ENCODE measurements at regions of chr14 and their contacts with region 1.

Region 1: DNA sequence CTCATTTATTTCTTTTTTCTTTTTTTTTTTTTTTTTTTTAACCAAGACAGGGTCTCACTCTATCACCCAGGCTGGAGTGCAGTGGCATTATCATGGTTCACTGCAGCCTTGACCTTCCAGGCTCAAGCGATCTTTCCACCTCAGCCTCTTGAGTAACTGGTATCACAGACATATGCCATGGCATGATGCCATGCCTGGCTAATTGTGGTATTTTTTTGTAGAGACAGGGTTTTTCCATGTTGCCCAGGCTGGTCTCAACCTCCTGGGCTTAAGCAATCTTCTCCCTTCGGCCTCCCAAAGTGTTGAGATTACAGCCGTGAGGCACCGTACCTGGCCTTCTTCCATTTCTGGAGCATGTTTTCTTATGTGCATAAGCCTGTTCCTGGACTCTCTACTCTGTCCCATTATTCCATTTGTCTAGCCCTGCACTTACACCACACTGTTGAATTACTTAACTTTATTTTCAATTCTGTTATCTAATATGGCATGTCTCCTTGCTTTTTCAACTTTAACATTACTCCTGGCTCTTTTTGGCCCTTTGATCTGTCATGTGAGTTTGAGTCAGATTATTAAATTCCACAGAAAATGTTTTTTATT is 47.9 kb upstream of the PTGDR start:
- DNase-seq: no peak
- H3K4me3 ChIP-seq: no peak overlapping the region
- H3K27ac ChIP-seq: no peak overlapping the region
- H3K4me1 ChIP-seq: peaks cover 0 to 9% (median 0%) of the 10 kb centered on the region in 4 donors
- H3K27me3 ChIP-seq: no peaks in the 10 kb centered on the region
- CTCF ChIP-seq: no peak
- EP300 ChIP-seq: no peak
- POLR2A ChIP-seq: no peak

Region 2: GRCh38 chr14:51044961-51045360 is 1174.6 kb before region 1 on chr14:
- in situ Hi-C with region 1: no loop called
- intact Hi-C with region 1: loop called (anchors 5 kb)
- DNase-seq: no peak
- H3K4me3 ChIP-seq: no peak overlapping the region
- H3K27ac ChIP-seq: no peak overlapping the region
- H3K4me1 ChIP-seq: no peaks in the 10 kb centered on the region
- H3K27me3 ChIP-seq: no peaks in the 10 kb centered on the region
- CTCF ChIP-seq: no peak
- EP300 ChIP-seq: no peak
- POLR2A ChIP-seq: no peak